ENCODE measurements at regions of chr3 and their contacts with region 1.

Region 1: GRCh38 chr3:66386925-66387650 is 113.7 kb downstream of the LRIG1 start:
- DNase-seq: peak; percentile 65
- ATAC-seq: peak; percentile 84
- H3K4me3 ChIP-seq: no peak overlapping the region
- H3K27ac ChIP-seq: peak overlapping the region; percentile 84
- H3K4me1 ChIP-seq: peaks cover 33% of the 10 kb centered on the region
- H3K27me3 ChIP-seq: no peaks in the 10 kb centered on the region
- CTCF ChIP-seq: no peak
- EP300 ChIP-seq: peak; percentile 40 to 66; a peak in 3 of 4 replicates
- POLR2A ChIP-seq: no peak; the same call in 1 of the 2 replicates
- RAD21 ChIP-seq: no peak

Region 2: GRCh38 chr3:66302288-66302687 is 84.8 kb before region 1 on chr3:
- CTCF ChIA-PET with region 1: no interaction called
- POLR2A ChIA-PET with region 1: no interaction called
- RAD21 ChIA-PET with region 1: interaction called, 3 read pairs
- SMC1A ChIA-PET with region 1: interaction called, 4 read pairs
- in situ Hi-C with region 1: no loop called
- intact Hi-C with region 1: loop called (anchors 1 kb)
- DNase-seq: no peak
- ATAC-seq: peak; percentile 78
- H3K4me3 ChIP-seq: no peak overlapping the region
- H3K27ac ChIP-seq: no peak overlapping the region
- H3K4me1 ChIP-seq: peaks cover 20% of the 10 kb centered on the region
- H3K27me3 ChIP-seq: no peaks in the 10 kb centered on the region
- CTCF ChIP-seq: no peak
- EP300 ChIP-seq: no peak; a peak in 1 of 4 replicates
- POLR2A ChIP-seq: no peak
- RAD21 ChIP-seq: no peak

Region 3: GRCh38 chr3:66365080-66365479 is 22.0 kb before region 1 on chr3:
- CTCF ChIA-PET with region 1: no interaction called
- POLR2A ChIA-PET with region 1: no interaction called
- RAD21 ChIA-PET with region 1: no interaction called
- SMC1A ChIA-PET with region 1: no interaction called
- in situ Hi-C with region 1: no loop called
- intact Hi-C with region 1: no loop called
- DNase-seq: no peak
- ATAC-seq: no peak
- H3K4me3 ChIP-seq: no peak overlapping the region
- H3K27ac ChIP-seq: no peak overlapping the region
- H3K4me1 ChIP-seq: no peaks in the 10 kb centered on the region
- H3K27me3 ChIP-seq: no peaks in the 10 kb centered on the region
- CTCF ChIP-seq: no peak
- EP300 ChIP-seq: no peak
- POLR2A ChIP-seq: no peak
- RAD21 ChIP-seq: no peak

Region 4: DNA sequence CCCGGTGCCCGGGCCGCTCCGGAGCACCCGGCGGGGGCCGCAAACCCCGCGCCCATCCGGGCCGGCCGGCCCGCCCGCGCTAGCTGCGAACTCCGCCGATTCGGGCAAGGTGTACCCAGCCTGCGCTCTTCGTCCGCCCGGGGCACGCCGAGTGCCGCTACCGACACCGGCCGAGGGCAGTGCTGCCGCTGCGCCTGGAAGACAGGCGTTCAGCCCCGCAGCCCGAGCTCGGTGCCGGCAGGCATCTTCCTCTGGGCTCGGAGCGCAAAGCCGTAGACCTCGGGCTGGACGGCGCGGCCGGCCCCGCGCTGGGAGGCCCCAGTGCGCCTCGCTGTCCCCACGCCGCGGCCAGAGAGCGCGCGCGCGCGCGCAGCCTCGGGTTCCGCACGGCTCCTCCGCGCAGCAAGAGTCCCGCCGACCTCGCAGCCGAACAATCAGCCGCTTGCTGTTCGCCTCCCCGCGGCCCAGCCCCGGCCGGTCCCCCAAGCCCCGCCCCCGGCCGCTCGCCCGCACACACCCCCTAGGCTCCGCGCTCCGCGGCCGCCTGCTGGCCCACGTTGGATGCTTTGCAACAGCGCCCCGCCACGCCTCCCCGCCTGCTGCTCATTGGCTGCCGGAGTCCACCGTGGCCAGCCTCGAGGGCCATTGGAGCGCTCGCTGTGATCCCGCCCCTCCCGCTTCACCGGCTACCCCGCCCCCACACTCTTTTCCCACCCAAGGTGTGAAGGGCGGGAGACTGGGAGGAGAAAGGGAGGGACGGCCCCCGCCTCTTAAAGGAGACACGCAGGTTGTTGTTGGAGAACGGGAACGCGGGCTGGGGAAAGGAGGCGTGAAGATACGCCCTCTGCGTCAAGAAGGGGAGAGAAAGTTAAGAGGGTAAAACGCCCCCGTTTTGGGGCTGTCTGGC is 113.7 kb after region 1 on chr3 and contains the start of gene LRIG1:
- CTCF ChIA-PET with region 1: no interaction called
- POLR2A ChIA-PET with region 1: no interaction called
- RAD21 ChIA-PET with region 1: no interaction called
- SMC1A ChIA-PET with region 1: no interaction called
- in situ Hi-C with region 1: no loop called
- intact Hi-C with region 1: loop called (anchors 2 kb)
- DNase-seq: peak; percentile 68
- ATAC-seq: peak; percentile 96
- H3K4me3 ChIP-seq: peak within 1 kb of the TSS; percentile 64
- H3K27ac ChIP-seq: no peak within 1 kb of the TSS
- H3K4me1 ChIP-seq: peaks cover 4% of the 10 kb centered on the region; the same call in 1 of the 2 replicates
- H3K27me3 ChIP-seq: peaks cover 2 to 4% of the 10 kb centered on the region in 2 experiments; a peak in 3 of 4 replicates
- CTCF ChIP-seq: peak in 2 of 3 experiments; percentile 13 to 20; a peak in 3 of 6 replicates
- EP300 ChIP-seq: no peak
- POLR2A ChIP-seq: peak; percentile 84
- RAD21 ChIP-seq: peak; percentile 47
- polyA plus RNA-seq, gene LRIG1: 0.84 to 2.5 TPM